ENCODE measurements at regions of chr20 and their contacts with region 1.

Region 1: GRCh38 chr20:34876162-34877001 is at the start of gene ACSS2:
- DNase-seq: peak; percentile 100
- ATAC-seq: peak; percentile 95
- total RNA-seq, gene ACSS2: 103 TPM

Region 2: DNA sequence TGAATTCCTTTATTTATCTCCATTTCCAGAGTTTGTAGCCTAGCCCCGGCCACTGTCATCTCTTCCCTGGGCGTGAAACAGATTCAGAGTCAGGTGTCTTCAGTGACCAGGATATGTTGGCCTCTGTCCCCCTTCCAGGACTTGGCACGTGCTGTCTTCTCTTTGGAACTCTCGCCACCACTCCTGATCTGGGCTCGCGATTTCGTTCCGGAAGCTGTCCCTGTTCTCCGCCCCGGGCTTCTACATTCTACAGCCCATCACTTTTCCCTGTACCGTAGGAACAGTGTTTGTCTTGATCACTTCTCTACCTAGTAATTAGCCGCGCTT is 78.5 kb after region 1 on chr20:
- intact Hi-C with region 1: loop called (anchors 5 kb)
- DNase-seq: no peak
- ATAC-seq: no peak

Region 3: DNA sequence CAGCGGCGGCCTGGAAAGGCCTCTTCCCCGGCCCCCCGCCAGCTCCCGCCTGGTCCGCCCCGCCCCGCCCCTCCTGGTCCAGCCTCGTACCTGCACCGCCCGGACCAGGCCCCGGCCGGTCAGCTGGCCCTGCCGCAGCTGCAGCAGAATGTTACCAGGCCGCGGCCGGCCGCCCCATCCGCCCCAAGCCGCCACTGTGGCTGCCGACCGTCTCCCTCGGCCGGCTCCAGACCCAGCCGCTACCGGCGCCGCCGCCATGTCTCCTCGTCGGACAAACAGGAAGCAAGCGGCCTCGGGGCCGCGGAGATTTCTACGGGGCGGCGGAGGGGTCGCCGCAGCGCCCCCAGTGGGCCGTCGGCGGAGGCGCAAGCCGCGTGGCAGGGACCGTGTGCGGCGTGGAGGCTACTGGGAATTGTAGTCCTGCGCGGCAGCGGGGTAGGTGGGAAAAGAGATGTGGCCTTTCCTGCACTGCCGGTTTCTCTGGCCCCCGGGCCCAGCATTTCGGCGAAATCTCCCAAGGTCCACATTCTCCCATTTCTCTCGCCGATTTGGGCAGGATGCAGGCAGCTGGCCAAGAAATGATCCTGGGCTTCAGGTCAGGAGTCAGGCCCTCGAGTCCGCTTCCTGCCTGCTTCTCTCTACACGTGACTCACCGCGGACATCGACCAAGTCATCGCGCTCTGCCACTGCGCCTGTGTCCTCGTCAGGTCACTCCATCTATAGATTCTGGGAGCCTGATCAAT is 216.3 kb after region 1 on chr20 and contains the start of gene TRPC4AP:
- intact Hi-C with region 1: loop called (anchors 10 kb)
- DNase-seq: peak; percentile 93
- ATAC-seq: peak; percentile 95
- total RNA-seq, gene TRPC4AP: 50.4 TPM

Measured in sciatic nerve (tissue), 2 donors.